CD14-positive monocyte (primary cell): ENCODE measurements at regions of chr5 and their contacts with region 1.

Region 1: DNA sequence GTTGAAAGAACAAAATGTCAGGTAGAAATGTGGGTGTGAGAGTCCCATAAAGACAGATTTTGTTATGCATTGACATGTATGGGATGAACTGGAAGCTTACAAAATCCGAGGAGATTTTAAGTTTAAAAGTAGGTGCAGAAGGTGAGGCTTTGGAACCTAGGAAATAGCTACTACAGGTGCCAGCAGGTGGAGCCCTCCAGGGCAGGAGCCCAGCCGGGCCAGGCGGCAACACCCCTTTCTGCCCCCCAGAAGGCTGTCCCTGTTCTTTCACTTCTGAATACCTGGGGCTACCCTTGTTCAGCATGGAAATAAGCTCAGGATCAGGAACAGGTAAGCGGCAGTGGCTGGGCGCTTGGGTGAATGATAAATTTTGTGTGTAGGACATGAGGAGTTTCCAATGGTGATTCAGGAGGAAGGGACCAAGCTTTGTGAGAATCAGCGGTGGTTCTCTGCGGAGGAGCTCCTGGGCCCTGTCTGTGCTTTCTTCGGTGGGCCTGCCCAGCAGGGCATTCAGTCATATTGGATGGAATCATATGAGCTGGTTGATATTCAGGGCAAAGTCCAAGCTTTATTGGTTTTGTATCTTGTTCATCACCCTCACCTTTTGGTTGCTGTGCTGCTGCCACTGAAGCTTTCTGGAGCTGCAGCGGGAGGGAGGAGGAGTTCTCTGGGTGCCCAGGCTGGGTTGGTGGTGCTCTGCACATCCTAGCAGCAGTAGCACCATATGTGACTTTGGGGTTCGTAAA is 12.3 kb downstream of the PCBD2 start:
- DNase-seq: no peak
- H3K4me3 ChIP-seq: no peak overlapping the region
- H3K4me3 Mint-ChIP-seq: no peak overlapping the region
- H3K27ac ChIP-seq: no peak overlapping the region
- H3K27ac Mint-ChIP-seq: peak overlapping the region in 1 of 7 donors; percentile 12
- H3K4me1 ChIP-seq: no peaks in the 10 kb centered on the region
- H3K4me1 Mint-ChIP-seq: no peaks in the 10 kb centered on the region
- H3K27me3 ChIP-seq: no peaks in the 10 kb centered on the region
- H3K27me3 Mint-ChIP-seq: no peaks in the 10 kb centered on the region
- CTCF ChIP-seq: no peak

Region 2: GRCh38 chr5:134803821-134804220 is 113.4 kb before region 1 on chr5:
- intact Hi-C with region 1: no loop called
- DNase-seq: no peak
- H3K4me3 ChIP-seq: no peak overlapping the region
- H3K4me3 Mint-ChIP-seq: no peak overlapping the region
- H3K27ac ChIP-seq: no peak overlapping the region
- H3K27ac Mint-ChIP-seq: peak overlapping the region in 1 of 7 donors; percentile 5
- H3K4me1 ChIP-seq: peaks cover 0 to 9% of the 10 kb centered on the region in 2 donors
- H3K4me1 Mint-ChIP-seq: peaks cover 8% of the 10 kb centered on the region
- H3K27me3 ChIP-seq: no peaks in the 10 kb centered on the region
- H3K27me3 Mint-ChIP-seq: peaks cover 0 to 2% (median 0%) of the 10 kb centered on the region in 3 donors
- CTCF ChIP-seq: no peak

Region 3: GRCh38 chr5:135034236-135034962 is 117.2 kb after region 1 on chr5:
- intact Hi-C with region 1: no loop called
- DNase-seq: no peak
- H3K4me3 ChIP-seq: no peak overlapping the region
- H3K4me3 Mint-ChIP-seq: peak overlapping the region; percentile 64 to 84
- H3K27ac ChIP-seq: no peak overlapping the region
- H3K27ac Mint-ChIP-seq: no peak overlapping the region
- H3K4me1 ChIP-seq: peaks cover 12 to 28% of the 10 kb centered on the region in 2 donors
- H3K4me1 Mint-ChIP-seq: peaks cover 33% of the 10 kb centered on the region
- H3K27me3 ChIP-seq: peaks cover 77 to 89% of the 10 kb centered on the region in 2 donors
- H3K27me3 Mint-ChIP-seq: peaks cover 88 to 94% (median 90%) of the 10 kb centered on the region in 3 donors
- CTCF ChIP-seq: no peak

Region 4: GRCh38 chr5:135154197-135154596 is 237.0 kb after region 1 on chr5:
- intact Hi-C with region 1: loop called in 1 of 2 experiments (anchors 10 kb)
- DNase-seq: peak in 2 of 3 donors; percentile 38
- H3K4me3 ChIP-seq: no peak overlapping the region
- H3K4me3 Mint-ChIP-seq: no peak overlapping the region
- H3K27ac ChIP-seq: no peak overlapping the region
- H3K27ac Mint-ChIP-seq: peak overlapping the region in 1 of 7 donors; percentile 8
- H3K4me1 ChIP-seq: peaks cover 3 to 18% of the 10 kb centered on the region in 2 donors
- H3K4me1 Mint-ChIP-seq: peaks cover 20% of the 10 kb centered on the region
- H3K27me3 ChIP-seq: peaks cover 0 to 2% of the 10 kb centered on the region in 2 donors
- H3K27me3 Mint-ChIP-seq: peaks cover 2 to 12% (median 10%) of the 10 kb centered on the region in 3 donors
- CTCF ChIP-seq: no peak